ENCODE measurements at regions of chr3 and their contacts with region 1.

Region 1: DNA sequence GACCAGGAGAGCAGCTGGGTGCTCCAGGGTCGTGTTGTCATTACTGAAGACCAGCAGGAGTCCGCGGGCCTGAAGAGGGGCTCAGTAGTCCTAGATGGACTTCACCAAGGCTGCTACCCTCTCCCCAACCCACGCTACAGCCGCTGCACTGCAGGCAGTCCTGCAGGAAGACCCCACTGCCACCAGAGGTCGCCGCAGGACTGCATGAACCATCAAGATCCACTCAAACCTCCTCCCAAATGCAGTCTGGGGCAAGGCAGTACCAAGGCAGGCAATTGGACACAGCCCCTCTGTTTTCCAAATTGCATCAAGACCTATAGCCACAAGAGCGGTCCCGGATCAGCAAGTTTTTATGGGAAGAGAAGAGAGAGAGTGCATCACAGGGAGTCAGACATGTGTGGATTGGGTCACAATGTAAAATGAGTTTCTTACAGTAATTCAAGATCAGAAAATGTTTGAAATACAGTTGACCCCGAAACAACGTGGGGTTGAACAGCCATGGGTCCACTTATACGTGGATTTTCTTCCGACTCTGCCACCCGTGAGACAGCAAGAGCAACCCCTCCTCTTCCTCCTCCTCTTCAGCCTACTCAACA is 46.7 kb downstream of the DZIP1L start:
- ATAC-seq: peak; percentile 88 to 99 (median 90)
- H3K4me3 ChIP-seq: no peak overlapping the region
- H3K27ac ChIP-seq: no peak overlapping the region
- H3K4me1 ChIP-seq: no peaks in the 10 kb centered on the region

Region 2: DNA sequence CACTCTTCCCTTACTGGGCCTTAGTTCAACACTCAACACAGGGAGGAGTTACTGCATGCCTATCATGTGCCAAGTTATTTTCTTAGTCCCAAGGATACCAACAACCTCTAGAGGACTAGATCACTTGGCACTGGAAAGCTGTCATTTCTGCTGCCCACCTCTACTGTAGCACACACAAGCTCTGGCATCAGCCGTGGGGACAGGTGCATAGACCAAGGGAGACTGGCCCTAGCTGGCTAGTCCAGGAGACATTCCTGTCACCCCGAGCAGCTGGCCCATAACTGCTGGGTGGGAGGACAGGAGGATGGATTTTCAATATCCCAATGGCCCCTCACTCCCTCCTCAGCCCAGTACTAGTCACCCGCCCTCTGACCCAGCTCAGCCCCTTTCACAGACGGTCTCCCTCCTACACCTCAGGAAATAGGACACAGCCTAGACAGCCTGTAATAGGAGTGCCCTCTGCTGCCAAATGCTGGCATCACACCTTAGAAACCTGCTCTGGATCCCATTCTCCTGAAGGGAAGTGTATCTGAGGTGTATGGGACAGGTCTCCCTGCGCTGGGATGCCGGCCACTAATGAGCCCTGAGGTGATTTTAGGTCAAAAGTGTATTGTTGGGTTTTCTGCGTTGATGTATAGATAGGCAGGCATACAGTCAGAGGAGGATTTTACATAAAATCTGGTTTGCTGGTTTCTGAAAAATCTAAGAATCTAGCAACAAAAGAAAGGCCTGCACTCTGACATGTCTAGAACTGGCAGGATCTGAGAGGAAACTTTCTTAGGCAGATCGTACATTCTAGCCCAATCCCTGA is 50.1 kb after region 1 on chr3:
- in situ Hi-C with region 1: loop called in 1 of 9 experiments (anchors 10 kb)
- ATAC-seq: peak; percentile 17 to 58 (median 35)
- H3K4me3 ChIP-seq: no peak overlapping the region
- H3K27ac ChIP-seq: no peak overlapping the region
- H3K4me1 ChIP-seq: peaks cover 5 to 12% of the 10 kb centered on the region in 2 donors